Activated CD4-positive, alpha-beta T cell treated with anti-CD3 and anti-CD28 coated beads for 36 hours (primary cell): ENCODE measurements at regions of chr22 and their contacts with region 1.

Region 1: DNA sequence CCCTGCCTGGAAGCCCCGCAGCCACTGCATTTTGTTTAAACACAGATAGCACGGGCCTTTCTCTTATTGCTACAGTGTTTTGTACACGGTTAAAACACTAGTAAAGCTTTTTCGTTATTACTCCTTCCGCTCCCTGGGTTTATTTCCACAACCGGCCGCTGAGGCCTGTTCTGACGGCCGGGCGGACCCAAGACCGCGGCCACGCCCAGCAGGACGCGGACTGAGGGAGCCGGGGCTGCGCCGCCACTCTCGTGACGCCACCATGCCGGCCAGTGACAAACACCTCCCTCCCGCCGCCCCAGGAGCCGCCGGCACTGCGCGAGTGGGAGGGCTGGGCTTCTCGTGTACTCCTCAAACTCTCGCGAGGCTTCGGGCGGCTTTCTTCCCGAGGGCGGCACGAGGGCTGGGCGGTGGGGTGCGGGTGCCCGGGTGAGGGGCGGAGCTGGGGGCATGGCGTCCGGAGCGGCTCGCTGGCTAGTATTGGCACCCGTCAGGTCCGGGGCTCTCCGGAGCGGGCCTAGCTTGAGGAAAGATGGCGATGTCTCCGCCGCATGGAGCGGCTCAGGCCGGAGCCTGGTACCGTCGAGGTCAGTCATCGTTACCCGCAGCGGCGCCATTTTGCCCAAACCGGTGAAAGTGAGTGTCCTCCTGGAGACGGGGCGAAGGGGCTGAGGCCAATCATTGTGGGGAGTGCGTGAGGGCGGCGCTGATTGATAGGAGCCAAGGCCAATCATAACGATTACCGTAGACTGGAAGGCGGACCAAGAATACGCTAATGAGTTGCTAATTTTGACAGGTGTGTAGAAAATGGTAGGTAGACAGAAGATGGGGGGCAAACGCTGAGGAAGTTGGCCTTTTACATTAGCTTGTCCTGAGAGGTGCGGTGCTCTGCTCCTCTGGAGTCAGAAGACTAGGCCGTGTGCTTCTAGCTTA is at the start of gene SMDT1:
- DNase-seq: peak; percentile 99
- ATAC-seq: peak; percentile 95
- H3K4me3 Mint-ChIP-seq: peak within 1 kb of the TSS; percentile 90
- H3K27ac Mint-ChIP-seq: peak within 1 kb of the TSS; percentile 96
- H3K4me1 Mint-ChIP-seq: peaks cover 29% of the 10 kb centered on the region
- H3K27me3 Mint-ChIP-seq: no peaks in the 10 kb centered on the region
- total RNA-seq, gene SMDT1: 17.2 to 45.4 TPM

Region 2: DNA sequence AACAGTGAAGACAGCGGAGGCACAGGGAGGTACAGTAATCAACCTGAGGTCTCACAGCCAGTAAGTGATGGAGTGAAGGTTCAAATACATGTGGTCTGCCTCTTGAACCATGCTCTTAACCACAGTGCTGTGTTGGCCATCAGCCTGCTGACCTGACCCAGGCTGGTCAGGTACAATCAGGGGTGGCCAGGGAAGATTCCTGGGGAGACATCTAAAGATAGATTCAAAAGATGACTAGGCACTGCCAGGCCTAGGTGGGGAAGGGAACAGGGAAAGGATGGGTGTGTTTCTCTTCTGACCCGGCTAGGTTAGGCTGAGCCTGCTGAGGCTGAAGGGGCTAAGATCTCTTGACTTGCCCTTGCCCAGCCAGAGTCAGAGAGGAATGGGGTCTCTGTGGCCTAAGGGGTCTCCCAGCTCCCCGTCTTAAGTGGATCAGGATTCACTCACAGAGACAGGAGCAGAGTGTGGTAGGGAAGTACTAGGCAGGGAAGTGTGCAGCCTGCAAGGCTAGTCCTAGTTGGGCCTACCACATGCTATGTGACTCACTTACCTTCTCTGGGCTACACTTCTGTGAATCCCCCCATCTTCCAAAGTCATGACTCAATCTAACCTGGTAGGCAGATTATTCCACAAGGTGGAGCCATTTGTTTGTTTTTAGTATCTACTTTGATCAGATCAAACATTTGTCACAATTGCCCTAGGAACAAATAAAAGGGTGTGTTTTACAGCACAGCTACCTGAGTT is 257.1 kb before region 1 on chr22:
- CTCF ChIA-PET with region 1: interaction called, 3 read pairs
- POLR2A ChIA-PET with region 1: no interaction called
- intact Hi-C with region 1: loop called in 1 of 2 experiments (anchors 10 kb)
- DNase-seq: peak; percentile 57
- ATAC-seq: peak; percentile 97
- H3K4me3 Mint-ChIP-seq: no peak overlapping the region
- H3K27ac Mint-ChIP-seq: peak overlapping the region; percentile 87
- H3K4me1 Mint-ChIP-seq: peaks cover 36% of the 10 kb centered on the region
- H3K27me3 Mint-ChIP-seq: no peaks in the 10 kb centered on the region

Region 3: GRCh38 chr22:41832553-41833368 is 246.8 kb before region 1 on chr22 and contains the start of gene SREBF2:
- CTCF ChIA-PET with region 1: no interaction called
- POLR2A ChIA-PET with region 1: no interaction called
- intact Hi-C with region 1: loop called (anchors 2 to 10 kb)
- DNase-seq: peak; percentile 100
- ATAC-seq: peak; percentile 94
- H3K4me3 Mint-ChIP-seq: peak within 1 kb of the TSS; percentile 96
- H3K27ac Mint-ChIP-seq: peak within 1 kb of the TSS; percentile 99
- H3K4me1 Mint-ChIP-seq: peaks cover 45% of the 10 kb centered on the region
- H3K27me3 Mint-ChIP-seq: no peaks in the 10 kb centered on the region
- total RNA-seq, gene SREBF2: 101 to 105 TPM

Region 4: DNA sequence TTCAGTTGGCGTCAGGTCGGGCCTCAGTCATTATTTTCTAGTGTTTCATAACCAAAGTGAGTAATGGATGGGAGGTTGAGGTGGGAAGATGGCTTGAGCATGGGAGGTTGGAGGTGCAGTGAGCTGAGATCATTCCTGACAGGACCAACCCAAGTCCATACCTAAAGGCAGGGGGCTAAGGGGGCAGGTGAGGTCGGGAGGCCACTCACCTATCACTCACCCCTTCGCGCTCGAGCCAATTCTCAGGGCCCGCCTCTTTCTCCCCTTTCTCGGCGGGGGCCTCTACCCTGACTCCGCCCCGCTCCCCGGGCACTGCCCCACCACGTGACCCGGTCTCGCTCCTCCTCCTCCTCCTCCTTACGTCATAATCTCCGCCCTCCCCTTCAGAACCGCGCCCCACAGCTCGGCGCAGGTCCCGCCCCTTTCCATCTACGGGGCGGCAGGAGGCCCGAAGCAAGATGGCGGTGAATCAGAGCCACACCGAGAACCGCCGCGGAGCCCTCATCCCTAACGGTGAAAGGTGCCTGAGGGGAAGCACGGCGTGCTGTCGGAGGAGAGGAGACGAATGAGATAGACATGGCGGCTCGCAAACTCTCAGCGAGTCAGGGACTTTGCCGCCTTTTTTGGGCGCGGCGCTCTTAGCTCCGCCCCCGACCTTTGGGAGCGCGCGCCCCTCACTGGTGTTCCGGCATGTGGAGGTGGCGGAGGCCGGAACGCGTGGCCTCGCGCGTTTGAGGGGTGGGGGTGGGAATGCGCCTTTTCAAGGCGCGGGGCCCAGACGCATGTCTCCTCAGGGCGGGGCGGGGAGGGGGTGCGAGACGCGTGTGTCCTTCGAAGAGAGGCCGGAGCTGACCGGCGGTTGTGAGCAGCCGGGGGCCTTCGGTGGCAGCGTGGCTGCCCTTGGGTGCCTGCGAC is 81.0 kb before region 1 on chr22 and contains the start of gene WBP2NL:
- CTCF ChIA-PET with region 1: no interaction called
- POLR2A ChIA-PET with region 1: no interaction called
- intact Hi-C with region 1: loop called (anchors 1 to 10 kb)
- DNase-seq: peak; percentile 92
- ATAC-seq: peak; percentile 97
- H3K4me3 Mint-ChIP-seq: peak within 1 kb of the TSS; percentile 77
- H3K27ac Mint-ChIP-seq: peak within 1 kb of the TSS; percentile 97
- H3K4me1 Mint-ChIP-seq: peaks cover 20% of the 10 kb centered on the region
- H3K27me3 Mint-ChIP-seq: no peaks in the 10 kb centered on the region
- total RNA-seq, gene WBP2NL: 0.30 to 0.54 TPM